ENCODE measurements at regions of chr6 and their contacts with region 1.

Region 1: GRCh38 chr6:30611150-30611855 is 5.7 kb downstream of the PPP1R10 start:
- DNase-seq: no peak
- ATAC-seq: no peak
- H3K4me3 ChIP-seq: no peak overlapping the region
- H3K27ac ChIP-seq: peak overlapping the region in 3 of 4 donors; percentile 3 to 99 (median 97)
- H3K4me1 ChIP-seq: peaks cover 40 to 46% of the 10 kb centered on the region in 2 donors
- H3K27me3 ChIP-seq: no peaks in the 10 kb centered on the region
- CTCF ChIP-seq: no peak
- POLR2A ChIP-seq: no peak

Region 2: DNA sequence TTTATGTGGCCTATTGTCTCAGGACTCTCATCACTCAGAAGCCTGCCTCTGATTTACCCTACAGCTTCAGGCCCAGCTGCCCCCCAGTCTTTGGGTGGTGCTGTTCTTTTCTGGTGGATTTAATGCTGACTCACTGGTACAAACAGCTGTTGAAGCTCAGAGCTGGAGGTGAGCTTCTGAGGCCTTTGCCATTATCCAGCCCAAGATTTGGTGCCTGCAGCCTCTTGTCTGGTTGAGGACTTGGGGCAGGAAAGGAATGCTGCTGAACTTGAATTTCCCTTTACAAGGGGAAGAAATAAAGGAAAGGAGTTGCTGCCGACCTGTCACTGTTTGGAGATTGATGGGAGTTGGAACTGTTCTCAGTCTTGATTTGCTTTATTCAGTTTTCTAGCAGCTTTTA is 20.3 kb before region 1 on chr6:
- in situ Hi-C with region 1: no loop called
- intact Hi-C with region 1: loop called (anchors 2 kb)
- DNase-seq: no peak
- ATAC-seq: peak; percentile 13 to 43
- H3K4me3 ChIP-seq: no peak overlapping the region
- H3K27ac ChIP-seq: peak overlapping the region; percentile 61 to 77 (median 71)
- H3K4me1 ChIP-seq: peaks cover 0 to 4% of the 10 kb centered on the region in 2 donors
- H3K27me3 ChIP-seq: no peaks in the 10 kb centered on the region
- CTCF ChIP-seq: no peak
- POLR2A ChIP-seq: no peak

Region 3: DNA sequence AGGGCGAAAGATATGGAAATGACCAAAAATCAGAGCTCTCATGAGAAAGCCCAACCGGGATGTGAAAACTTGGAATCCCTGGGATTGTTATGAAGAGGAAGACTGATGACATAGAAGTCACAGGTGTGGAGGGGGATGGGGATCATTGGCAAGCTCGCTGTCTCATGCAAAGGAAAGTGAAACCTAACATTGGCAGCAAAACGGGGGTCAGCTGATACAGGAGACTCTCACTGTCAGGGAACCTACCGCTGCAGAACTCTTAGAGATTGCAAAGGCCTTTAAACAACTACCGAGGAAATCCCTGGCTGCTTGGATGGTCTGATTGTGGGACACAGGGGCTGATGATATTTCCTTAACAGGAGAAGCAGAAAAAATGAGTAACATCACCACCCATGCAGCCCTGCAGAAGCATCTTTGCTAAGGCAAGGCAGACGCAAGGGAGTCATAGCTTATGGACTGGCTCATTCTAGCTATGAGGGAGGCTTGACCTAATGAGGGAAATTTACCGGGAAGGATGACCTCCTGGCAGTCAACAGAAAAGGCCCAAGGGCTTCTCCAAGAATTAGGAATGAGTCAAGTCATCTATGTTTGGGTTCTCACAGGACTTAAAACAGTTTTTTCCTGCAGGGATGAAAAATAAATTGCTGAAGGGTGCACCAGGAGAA is 379.3 kb after region 1 on chr6:
- in situ Hi-C with region 1: no loop called
- intact Hi-C with region 1: no loop called
- DNase-seq: peak in 1 of 2 donors; percentile 27
- ATAC-seq: peak in 1 of 2 donors; percentile 49
- H3K4me3 ChIP-seq: no peak overlapping the region
- H3K27ac ChIP-seq: no peak overlapping the region
- H3K4me1 ChIP-seq: peaks cover 0 to 3% of the 10 kb centered on the region in 2 donors
- H3K27me3 ChIP-seq: no peaks in the 10 kb centered on the region
- CTCF ChIP-seq: no peak
- POLR2A ChIP-seq: no peak